Caco-2 (cell line): ENCODE measurements at regions of chr12 and their contacts with region 1.

Region 1: GRCh38 chr12:19048943-19049342 is 80.6 kb upstream of the PLEKHA5 start:
- DNase-seq: no peak
- H3K4me3 ChIP-seq: no peak overlapping the region
- H3K4me3 Mint-ChIP-seq: no peak overlapping the region
- H3K27ac Mint-ChIP-seq: no peak overlapping the region
- H3K4me1 ChIP-seq: peaks cover 22% of the 10 kb centered on the region
- H3K4me1 Mint-ChIP-seq: peaks cover 32% of the 10 kb centered on the region
- H3K27me3 ChIP-seq: no peaks in the 10 kb centered on the region
- H3K27me3 Mint-ChIP-seq: no peaks in the 10 kb centered on the region
- CTCF ChIP-seq: no peak

Region 2: GRCh38 chr12:18861287-18861858 is 187.6 kb before region 1 on chr12:
- CTCF ChIA-PET with region 1: interaction called, 3 read pairs
- POLR2A ChIA-PET with region 1: no interaction called
- intact Hi-C with region 1: loop called (anchors 5 kb)
- DNase-seq: peak in 1 of 2 experiments; percentile 56
- H3K4me3 ChIP-seq: no peak overlapping the region
- H3K4me3 Mint-ChIP-seq: no peak overlapping the region
- H3K27ac Mint-ChIP-seq: no peak overlapping the region
- H3K4me1 ChIP-seq: no peaks in the 10 kb centered on the region
- H3K4me1 Mint-ChIP-seq: no peaks in the 10 kb centered on the region
- H3K27me3 ChIP-seq: no peaks in the 10 kb centered on the region; the same call in 1 of the 2 replicates
- H3K27me3 Mint-ChIP-seq: peaks cover 13% of the 10 kb centered on the region
- CTCF ChIP-seq: peak; percentile 66 to 92

Region 3: DNA sequence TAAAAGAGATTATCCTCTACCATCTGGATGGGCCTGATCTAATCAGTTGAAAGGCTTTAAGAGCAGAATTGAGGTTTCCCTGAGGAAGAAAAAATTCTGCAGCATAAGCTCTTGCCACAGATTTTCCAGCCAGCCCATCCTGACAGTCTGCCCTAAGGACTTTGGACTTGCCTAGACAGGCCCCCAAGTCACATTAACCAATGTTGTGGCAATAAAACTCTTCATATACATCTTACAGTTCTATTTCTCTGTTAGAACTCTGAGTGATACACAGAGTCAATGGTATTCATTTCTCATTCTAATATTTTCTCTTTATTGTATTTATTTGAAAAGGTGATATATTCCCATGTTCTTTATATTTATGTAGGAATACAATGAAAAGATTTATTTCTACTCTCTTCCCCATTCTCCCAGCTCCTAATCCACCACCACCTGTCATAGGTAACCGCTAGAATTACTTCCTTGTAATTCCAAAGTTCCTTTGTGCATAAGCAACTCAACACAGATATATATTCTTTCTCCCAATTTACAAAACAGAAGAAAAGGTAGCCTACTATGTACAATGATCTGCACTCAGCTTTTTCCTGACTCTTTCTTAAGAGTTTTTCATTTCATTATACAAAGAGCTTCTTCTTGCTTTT is 129.0 kb before region 1 on chr12:
- CTCF ChIA-PET with region 1: no interaction called
- POLR2A ChIA-PET with region 1: no interaction called
- intact Hi-C with region 1: no loop called
- DNase-seq: peak; percentile 32 to 49
- H3K4me3 ChIP-seq: no peak overlapping the region
- H3K4me3 Mint-ChIP-seq: no peak overlapping the region
- H3K27ac Mint-ChIP-seq: no peak overlapping the region
- H3K4me1 ChIP-seq: 0 out of 2 replicates have a peak, but pooled peaks cover 7% of the 10 kb centered on the region
- H3K4me1 Mint-ChIP-seq: peaks cover 7% of the 10 kb centered on the region
- H3K27me3 ChIP-seq: no peaks in the 10 kb centered on the region; the same call in 1 of the 2 replicates
- H3K27me3 Mint-ChIP-seq: no peaks in the 10 kb centered on the region
- CTCF ChIP-seq: no peak

Region 4: DNA sequence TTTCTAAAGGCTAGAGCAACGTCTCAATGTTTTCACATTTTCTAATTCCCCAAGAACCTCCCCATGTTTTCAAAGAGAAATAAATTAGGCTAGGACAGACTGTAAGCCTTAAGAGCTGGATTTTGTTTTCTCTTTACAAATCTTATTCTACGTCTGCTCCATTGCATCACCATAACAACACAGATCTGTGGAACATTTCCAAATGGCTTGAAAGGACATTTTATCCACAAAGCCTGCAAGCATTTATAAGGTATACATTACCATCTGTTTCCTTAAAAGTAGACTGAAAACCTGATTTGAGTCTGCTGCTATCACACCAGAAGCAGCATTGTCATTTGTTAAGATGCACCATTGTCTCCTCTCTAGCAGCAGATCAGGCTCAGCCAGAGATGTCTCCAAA is 34.7 kb before region 1 on chr12:
- CTCF ChIA-PET with region 1: no interaction called
- POLR2A ChIA-PET with region 1: no interaction called
- intact Hi-C with region 1: loop called (anchors 1 kb)
- DNase-seq: no peak
- H3K4me3 ChIP-seq: no peak overlapping the region
- H3K4me3 Mint-ChIP-seq: no peak overlapping the region
- H3K27ac Mint-ChIP-seq: no peak overlapping the region
- H3K4me1 ChIP-seq: peaks cover 17% of the 10 kb centered on the region
- H3K4me1 Mint-ChIP-seq: peaks cover 29% of the 10 kb centered on the region
- H3K27me3 ChIP-seq: no peaks in the 10 kb centered on the region
- H3K27me3 Mint-ChIP-seq: no peaks in the 10 kb centered on the region
- CTCF ChIP-seq: no peak

Region 5: DNA sequence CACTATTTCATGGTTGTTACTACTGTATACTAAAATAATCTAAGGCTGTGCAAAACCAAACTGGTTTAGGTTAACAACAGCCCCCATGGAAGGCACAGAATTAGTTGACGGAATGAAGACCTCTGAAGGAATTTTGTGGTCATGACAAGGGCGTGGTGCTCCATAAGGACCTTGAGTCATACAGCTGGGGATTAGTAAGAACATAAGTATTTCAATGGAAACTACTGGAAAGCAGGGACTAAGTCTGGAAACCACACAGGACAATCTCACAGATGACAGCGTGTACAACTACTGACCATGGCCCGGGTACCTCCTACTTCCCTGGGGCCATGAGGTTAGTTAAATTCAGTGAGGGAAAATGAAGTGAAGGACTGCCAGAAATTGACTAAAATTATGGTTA is 17.9 kb before region 1 on chr12:
- CTCF ChIA-PET with region 1: no interaction called
- POLR2A ChIA-PET with region 1: no interaction called
- intact Hi-C with region 1: no loop called
- DNase-seq: no peak
- H3K4me3 ChIP-seq: no peak overlapping the region
- H3K4me3 Mint-ChIP-seq: no peak overlapping the region
- H3K27ac Mint-ChIP-seq: no peak overlapping the region
- H3K4me1 ChIP-seq: peaks cover 18% of the 10 kb centered on the region
- H3K4me1 Mint-ChIP-seq: peaks cover 8% of the 10 kb centered on the region
- H3K27me3 ChIP-seq: no peaks in the 10 kb centered on the region
- H3K27me3 Mint-ChIP-seq: no peaks in the 10 kb centered on the region
- CTCF ChIP-seq: no peak

Region 6: DNA sequence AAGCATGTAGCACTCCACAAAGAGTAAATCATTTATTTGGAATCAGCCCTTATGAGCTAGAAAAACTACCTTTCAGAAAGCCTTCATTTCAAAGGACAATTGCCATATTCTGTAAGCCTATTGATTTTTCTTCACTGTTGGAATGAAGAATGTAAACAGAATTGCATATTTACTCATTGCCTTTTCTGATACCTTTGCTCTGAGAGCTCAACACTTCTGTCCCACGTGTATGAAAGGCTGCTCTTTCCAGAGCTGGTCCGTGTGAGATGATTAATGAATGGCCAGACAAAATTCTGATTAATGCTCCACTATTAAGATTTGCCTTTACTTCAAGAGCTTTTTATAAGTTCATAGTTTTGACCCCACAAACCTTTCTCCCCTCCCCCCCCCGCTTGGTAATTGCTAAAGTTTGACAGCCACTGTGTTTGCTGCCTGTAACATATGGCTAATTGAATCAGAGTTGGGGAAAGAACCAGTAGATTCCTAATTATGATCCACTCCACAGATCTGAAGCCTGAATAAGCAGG is 17.6 kb after region 1 on chr12:
- CTCF ChIA-PET with region 1: interaction called, 4 read pairs
- POLR2A ChIA-PET with region 1: interaction called, 4 read pairs
- intact Hi-C with region 1: loop called (anchors 2 kb)
- DNase-seq: peak in 1 of 2 experiments; percentile 27
- H3K4me3 ChIP-seq: peak overlapping the region; percentile 12; the same call in 1 of the 2 replicates
- H3K4me3 Mint-ChIP-seq: peak overlapping the region; percentile 61
- H3K27ac Mint-ChIP-seq: peak overlapping the region; percentile 68
- H3K4me1 ChIP-seq: peaks cover 26% of the 10 kb centered on the region
- H3K4me1 Mint-ChIP-seq: peaks cover 32% of the 10 kb centered on the region
- H3K27me3 ChIP-seq: no peaks in the 10 kb centered on the region
- H3K27me3 Mint-ChIP-seq: no peaks in the 10 kb centered on the region
- CTCF ChIP-seq: no peak

Region 7: GRCh38 chr12:19095756-19096480 is 47.0 kb after region 1 on chr12:
- CTCF ChIA-PET with region 1: interaction called, 5 read pairs
- POLR2A ChIA-PET with region 1: interaction called, 3 read pairs
- intact Hi-C with region 1: loop called (anchors 1 kb)
- DNase-seq: peak in 1 of 2 experiments; percentile 18
- H3K4me3 ChIP-seq: peak overlapping the region; percentile 13; the same call in 1 of the 2 replicates
- H3K4me3 Mint-ChIP-seq: peak overlapping the region; percentile 34
- H3K27ac Mint-ChIP-seq: peak overlapping the region; percentile 47
- H3K4me1 ChIP-seq: peaks cover 23% of the 10 kb centered on the region
- H3K4me1 Mint-ChIP-seq: peaks cover 22% of the 10 kb centered on the region
- H3K27me3 ChIP-seq: no peaks in the 10 kb centered on the region
- H3K27me3 Mint-ChIP-seq: no peaks in the 10 kb centered on the region
- CTCF ChIP-seq: no peak

Region 8: DNA sequence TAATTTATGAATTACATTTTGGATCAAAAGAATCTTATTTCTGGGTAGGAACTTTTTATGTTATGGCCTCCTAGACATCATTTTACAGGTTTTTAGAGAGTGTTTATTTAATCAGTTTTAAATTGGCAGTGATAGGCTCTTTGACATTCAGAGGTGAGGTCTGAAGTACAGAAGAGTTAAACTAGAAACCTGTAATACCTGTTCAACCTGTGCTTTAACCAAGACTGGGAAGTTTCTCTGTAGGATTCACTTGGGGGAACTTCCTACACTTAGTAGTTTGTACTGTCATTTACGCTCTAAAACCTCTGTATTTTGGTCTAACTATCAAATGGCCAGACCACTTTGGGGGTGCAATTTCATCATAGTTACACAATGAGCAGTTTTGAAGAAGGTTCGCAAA is 116.5 kb after region 1 on chr12:
- CTCF ChIA-PET with region 1: no interaction called
- POLR2A ChIA-PET with region 1: no interaction called
- intact Hi-C with region 1: loop called (anchors 5 kb)
- DNase-seq: peak in 1 of 2 experiments; percentile 29
- H3K4me3 ChIP-seq: no peak overlapping the region
- H3K4me3 Mint-ChIP-seq: peak overlapping the region; percentile 17
- H3K27ac Mint-ChIP-seq: no peak overlapping the region
- H3K4me1 ChIP-seq: peaks cover 22% of the 10 kb centered on the region
- H3K4me1 Mint-ChIP-seq: peaks cover 52% of the 10 kb centered on the region
- H3K27me3 ChIP-seq: no peaks in the 10 kb centered on the region
- H3K27me3 Mint-ChIP-seq: no peaks in the 10 kb centered on the region
- CTCF ChIP-seq: no peak

Region 9: DNA sequence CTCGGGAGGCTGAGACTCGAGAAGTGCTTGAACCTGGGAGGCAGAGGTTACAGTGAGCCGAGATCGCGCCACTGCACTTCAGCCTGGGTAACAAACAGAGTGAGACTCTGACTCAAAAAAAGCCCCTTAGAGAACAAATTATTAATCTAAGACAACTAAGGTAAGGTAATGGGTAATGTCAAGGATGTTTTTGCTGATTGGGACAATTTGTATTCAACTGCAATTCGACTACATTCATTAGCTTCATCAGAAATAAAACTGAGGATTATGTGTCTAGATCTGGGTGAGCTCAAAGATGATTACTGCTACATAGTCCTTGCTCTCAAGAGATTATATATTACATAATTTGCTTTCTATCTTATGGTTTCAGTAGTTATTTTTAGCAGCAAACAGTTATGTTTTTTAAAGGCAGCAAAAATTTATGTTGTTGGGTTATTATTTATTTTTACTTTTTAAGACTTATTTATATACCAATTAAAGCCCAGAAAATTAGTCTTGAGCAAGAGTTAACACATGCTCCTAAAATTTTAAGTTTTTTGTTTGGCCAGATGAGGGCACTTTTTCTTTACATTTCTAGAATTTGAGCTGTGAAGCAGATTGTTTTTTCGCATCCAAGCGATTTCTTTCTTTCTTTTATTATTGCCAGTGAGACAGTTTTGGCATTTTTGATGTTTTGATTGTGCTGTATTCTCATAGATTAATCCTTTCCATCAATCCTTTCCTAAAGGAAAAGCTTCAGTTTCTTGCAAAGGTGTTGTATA is 132.9 kb after region 1 on chr12:
- CTCF ChIA-PET with region 1: interaction called, 4 read pairs
- POLR2A ChIA-PET with region 1: no interaction called
- intact Hi-C with region 1: loop called (anchors 5 kb)
- DNase-seq: no peak
- H3K4me3 ChIP-seq: no peak overlapping the region
- H3K4me3 Mint-ChIP-seq: no peak overlapping the region
- H3K27ac Mint-ChIP-seq: no peak overlapping the region
- H3K4me1 ChIP-seq: no peaks in the 10 kb centered on the region
- H3K4me1 Mint-ChIP-seq: peaks cover 10% of the 10 kb centered on the region
- H3K27me3 ChIP-seq: no peaks in the 10 kb centered on the region
- H3K27me3 Mint-ChIP-seq: no peaks in the 10 kb centered on the region
- CTCF ChIP-seq: peak in 1 of 2 experiments; percentile 28

Region 10: DNA sequence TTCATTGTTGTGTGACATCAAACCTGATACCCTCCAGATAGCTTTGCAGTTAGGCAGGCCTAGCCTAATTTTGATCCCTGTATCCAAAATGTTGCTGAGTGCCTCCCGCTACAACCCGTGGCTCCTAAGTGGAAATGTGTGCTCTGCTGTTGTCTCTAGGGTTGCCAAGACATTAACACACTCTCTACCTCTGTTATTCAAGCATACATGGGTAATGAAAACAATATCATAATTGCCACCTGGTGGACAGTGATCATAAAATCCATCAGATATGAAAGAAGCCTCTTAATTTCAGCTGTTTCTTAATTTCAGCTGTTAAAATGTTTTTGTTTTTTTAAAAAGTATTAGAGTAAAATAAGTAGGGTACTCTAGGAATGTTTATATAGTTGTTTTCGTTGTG is 174.1 kb after region 1 on chr12:
- CTCF ChIA-PET with region 1: no interaction called
- POLR2A ChIA-PET with region 1: no interaction called
- intact Hi-C with region 1: no loop called
- DNase-seq: no peak
- H3K4me3 ChIP-seq: no peak overlapping the region
- H3K4me3 Mint-ChIP-seq: no peak overlapping the region
- H3K27ac Mint-ChIP-seq: no peak overlapping the region
- H3K4me1 ChIP-seq: 0 out of 2 replicates have a peak, but pooled peaks cover 3% of the 10 kb centered on the region
- H3K4me1 Mint-ChIP-seq: peaks cover 13% of the 10 kb centered on the region
- H3K27me3 ChIP-seq: no peaks in the 10 kb centered on the region
- H3K27me3 Mint-ChIP-seq: no peaks in the 10 kb centered on the region
- CTCF ChIP-seq: peak; percentile 14 to 48